ENCODE measurements at regions of chr12 and their contacts with region 1.

Region 1: DNA sequence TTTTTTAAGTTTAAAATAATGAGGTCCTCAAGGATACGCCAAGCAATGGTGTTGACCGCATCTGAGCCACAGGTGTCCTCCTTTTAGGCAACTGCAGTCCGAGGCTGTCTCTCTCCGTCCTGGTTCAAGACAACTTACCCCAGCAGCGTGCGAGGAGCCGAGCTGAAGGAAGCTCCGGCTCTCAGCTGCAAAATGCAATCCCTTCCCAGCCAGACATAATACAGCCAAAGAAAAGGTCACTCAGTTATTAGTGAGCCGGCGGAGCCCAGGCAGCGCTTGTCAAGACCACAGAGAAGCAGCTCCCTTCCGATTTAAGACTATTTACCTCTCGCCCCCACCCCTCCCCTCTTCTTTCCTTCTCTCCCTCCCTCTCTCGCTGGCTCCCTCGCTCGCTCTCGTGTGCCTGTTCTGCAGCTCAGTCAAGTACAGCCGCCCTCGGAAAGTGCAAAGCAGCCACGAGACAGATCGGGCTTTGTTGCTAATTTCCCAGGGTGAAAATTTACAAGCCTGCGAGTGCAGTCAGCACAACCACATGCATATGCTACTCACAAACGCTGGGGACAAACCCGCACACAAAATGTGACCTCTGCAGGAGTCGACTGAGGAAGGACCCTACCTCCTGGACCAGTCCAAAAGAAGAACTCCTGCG is 363 bp upstream of the LMO3 start:
- DNase-seq: peak; percentile 89
- H3K4me3 ChIP-seq: peak overlapping the region; percentile 55
- H3K27ac ChIP-seq: peak overlapping the region; percentile 74
- H3K4me1 ChIP-seq: peaks cover 59% of the 10 kb centered on the region
- H3K27me3 ChIP-seq: no peaks in the 10 kb centered on the region
- CTCF ChIP-seq: no peak

Region 2: DNA sequence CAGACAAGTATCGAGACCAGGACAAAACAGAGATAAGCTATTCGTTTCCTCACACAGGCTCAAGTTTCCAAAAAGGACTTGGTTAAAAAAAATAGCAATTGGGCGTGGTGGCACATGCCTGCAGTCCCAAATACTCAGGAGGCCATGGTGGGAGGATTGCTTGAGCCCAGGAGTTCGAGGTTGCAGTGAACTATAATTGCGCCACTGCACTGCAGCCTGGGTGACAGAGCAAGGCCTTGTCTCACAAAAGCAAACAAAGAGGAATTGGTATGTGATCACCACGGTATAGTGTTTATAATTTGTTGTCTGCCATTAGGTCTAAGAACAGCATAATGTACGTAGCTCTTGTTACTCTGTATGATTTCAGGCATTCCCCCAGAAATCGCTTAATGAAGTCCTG is 519.9 kb before region 1 on chr12:
- CTCF ChIA-PET with region 1: no interaction called
- POLR2A ChIA-PET with region 1: no interaction called
- intact Hi-C with region 1: loop called (anchors 10 kb)
- DNase-seq: no peak
- H3K4me3 ChIP-seq: no peak overlapping the region
- H3K27ac ChIP-seq: no peak overlapping the region
- H3K4me1 ChIP-seq: peaks cover 28% of the 10 kb centered on the region
- H3K27me3 ChIP-seq: no peaks in the 10 kb centered on the region
- CTCF ChIP-seq: no peak

Region 3: DNA sequence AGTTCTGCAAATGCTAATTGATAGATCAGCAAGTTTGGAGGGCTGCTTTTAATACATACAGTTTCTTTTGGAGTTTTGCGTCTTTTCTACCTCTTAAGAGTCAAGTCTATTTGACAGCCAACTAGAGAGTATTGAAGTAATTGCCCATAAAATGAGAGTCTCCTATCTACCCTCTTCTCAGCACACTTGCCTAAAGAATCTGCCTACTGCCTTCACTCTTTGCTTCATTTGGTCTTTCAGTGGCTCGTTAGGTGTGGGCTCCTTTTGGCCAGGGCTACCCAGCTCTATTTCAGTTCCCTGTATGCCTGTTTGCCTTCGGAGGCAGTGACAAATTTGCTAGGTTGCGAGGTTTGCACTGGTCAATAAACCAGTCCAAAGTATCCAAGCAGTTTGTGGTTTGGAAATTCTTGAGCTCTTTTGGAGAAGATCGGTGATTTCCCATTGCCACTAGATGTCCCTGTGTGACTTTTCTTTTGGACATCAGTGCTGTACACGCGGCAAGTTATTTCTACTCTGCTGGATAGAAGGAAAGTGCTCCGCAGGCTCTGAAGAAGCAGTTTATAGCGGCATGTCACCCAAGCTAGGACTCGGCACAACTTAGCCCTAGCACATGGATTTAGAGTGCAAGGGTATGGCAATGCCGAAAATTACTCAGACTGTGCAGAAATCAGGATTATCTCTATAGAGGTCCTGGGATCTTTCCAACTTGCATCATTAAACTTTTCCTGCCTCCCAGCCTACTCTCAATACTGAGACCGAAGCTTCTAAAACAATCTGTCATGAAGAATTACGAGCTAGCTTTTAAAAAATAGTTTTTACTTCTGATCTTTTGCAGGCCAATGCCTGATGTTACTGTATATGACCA is 220.3 kb before region 1 on chr12:
- CTCF ChIA-PET with region 1: interaction called, 3 read pairs
- POLR2A ChIA-PET with region 1: no interaction called
- intact Hi-C with region 1: loop called (anchors 5 kb)
- DNase-seq: peak; percentile 91
- H3K4me3 ChIP-seq: no peak overlapping the region
- H3K27ac ChIP-seq: peak overlapping the region; percentile 48
- H3K4me1 ChIP-seq: peaks cover 13% of the 10 kb centered on the region
- H3K27me3 ChIP-seq: no peaks in the 10 kb centered on the region
- CTCF ChIP-seq: peak; percentile 75

Region 4: DNA sequence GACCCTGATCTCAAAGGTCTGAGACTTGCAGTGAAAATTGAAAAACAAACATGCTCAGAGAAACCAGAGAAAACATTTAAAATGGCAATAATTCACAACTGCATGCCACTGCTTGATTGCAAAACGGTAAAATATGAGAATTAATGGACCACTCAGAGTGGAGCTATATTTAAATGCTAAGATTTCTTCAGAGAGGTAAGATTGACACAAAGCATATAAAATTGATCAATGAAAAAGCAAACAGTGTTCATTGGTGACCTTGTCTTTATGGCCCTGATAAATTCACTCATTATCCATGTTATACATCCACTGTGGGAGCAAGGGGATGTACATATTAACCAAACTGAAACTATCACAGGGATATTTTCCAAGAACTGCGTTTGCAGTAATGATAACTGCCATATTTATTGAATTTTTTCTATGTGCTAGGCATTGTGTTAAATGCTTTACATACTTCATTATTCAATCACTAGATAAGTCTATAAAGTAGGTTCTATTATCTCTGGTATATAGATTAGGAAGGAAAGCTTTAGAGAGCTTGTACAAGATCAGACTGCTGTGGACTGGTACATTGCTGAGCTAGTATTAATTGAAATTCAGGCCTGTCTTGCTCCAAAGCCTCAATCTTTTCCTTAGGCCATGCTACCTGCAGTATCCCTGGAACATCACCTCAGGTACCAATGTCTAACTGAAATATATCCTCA is 113.5 kb after region 1 on chr12:
- CTCF ChIA-PET with region 1: no interaction called
- POLR2A ChIA-PET with region 1: no interaction called
- intact Hi-C with region 1: loop called (anchors 5 kb)
- DNase-seq: no peak
- H3K4me3 ChIP-seq: no peak overlapping the region
- H3K27ac ChIP-seq: no peak overlapping the region
- H3K4me1 ChIP-seq: peaks cover 33% of the 10 kb centered on the region
- H3K27me3 ChIP-seq: no peaks in the 10 kb centered on the region
- CTCF ChIP-seq: no peak

Region 5: GRCh38 chr12:16984484-16984883 is 378.2 kb after region 1 on chr12:
- CTCF ChIA-PET with region 1: no interaction called
- POLR2A ChIA-PET with region 1: no interaction called
- intact Hi-C with region 1: no loop called
- DNase-seq: no peak
- H3K4me3 ChIP-seq: no peak overlapping the region
- H3K27ac ChIP-seq: no peak overlapping the region
- H3K4me1 ChIP-seq: no peaks in the 10 kb centered on the region
- H3K27me3 ChIP-seq: no peaks in the 10 kb centered on the region
- CTCF ChIP-seq: no peak

Region 6: DNA sequence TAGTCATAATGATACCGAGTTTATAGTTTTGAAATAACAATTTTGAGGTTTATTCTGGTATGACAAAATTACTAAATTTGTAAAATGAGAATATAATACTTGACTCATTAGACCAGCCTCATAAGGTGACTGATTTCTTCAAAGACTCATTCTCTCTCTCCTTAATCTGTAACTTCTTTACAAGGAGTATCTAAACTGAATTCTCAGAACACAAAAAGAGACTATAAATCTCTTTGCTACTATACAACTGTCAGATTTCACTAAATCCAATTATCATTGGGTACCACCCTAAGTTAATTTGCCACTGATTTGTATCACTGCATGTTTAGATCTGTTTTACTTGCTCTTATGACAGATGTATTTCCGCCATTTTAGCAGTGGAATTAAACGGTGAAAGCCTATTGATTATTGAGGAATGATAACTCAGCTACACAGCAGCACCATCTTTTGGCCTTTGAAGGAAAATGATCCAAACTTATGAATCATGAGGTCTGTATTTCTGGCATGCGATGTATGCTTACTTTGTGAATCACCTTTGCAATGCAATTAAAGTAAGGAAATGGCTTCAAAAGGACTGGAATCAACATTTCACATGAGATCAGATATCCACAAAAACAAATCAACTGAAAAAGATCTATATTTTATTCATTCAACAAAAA is 1322.5 kb after region 1 on chr12:
- CTCF ChIA-PET with region 1: no interaction called
- POLR2A ChIA-PET with region 1: no interaction called
- intact Hi-C with region 1: loop called (anchors 5 kb)
- DNase-seq: peak; percentile 84
- H3K4me3 ChIP-seq: no peak overlapping the region
- H3K27ac ChIP-seq: no peak overlapping the region
- H3K4me1 ChIP-seq: peaks cover 24% of the 10 kb centered on the region
- H3K27me3 ChIP-seq: no peaks in the 10 kb centered on the region
- CTCF ChIP-seq: peak; percentile 53

Measured in A673 (cell line).